Vagina (tissue), 2 donors: ENCODE measurements at regions of chr22 and their contacts with region 1.

Region 1: GRCh38 chr22:20418211-20418788 is 19.3 kb downstream of the SCARF2 start:
- DNase-seq: no peak
- H3K4me3 ChIP-seq: peak overlapping the region; percentile 26 to 50
- H3K27ac ChIP-seq: peak overlapping the region; percentile 15
- H3K4me1 ChIP-seq: peaks cover 10% of the 10 kb centered on the region
- H3K27me3 ChIP-seq: no peaks in the 10 kb centered on the region
- CTCF ChIP-seq: peak; percentile 73 to 93 (median 74)
- POLR2A ChIP-seq: no peak

Region 2: DNA sequence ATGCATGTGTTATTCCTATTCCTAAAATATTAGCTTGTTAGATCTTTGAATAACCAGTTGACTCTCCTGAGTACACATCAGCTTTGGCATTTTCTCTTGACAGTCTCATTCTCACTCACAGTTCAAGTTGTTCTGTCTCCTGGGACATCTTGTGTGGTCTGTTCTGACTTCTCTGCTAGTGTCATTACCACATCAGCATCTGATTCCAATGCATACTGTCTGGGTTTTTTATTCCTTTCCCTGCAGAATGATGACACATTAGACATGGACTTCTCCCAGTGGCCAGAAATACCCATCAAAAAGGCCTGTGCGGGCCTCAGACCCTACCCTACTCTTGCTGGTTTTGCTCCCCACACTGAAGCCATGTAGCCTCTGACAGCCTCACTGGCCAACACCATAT is 21.7 kb before region 1 on chr22:
- intact Hi-C with region 1: loop called (anchors 1 kb)
- DNase-seq: peak; percentile 31 to 52
- H3K4me3 ChIP-seq: no peak overlapping the region
- H3K27ac ChIP-seq: no peak overlapping the region
- H3K4me1 ChIP-seq: peaks cover 30% of the 10 kb centered on the region
- H3K27me3 ChIP-seq: no peaks in the 10 kb centered on the region
- CTCF ChIP-seq: no peak
- POLR2A ChIP-seq: no peak

Region 3: GRCh38 chr22:20456064-20456721 is 37.9 kb after region 1 on chr22:
- intact Hi-C with region 1: loop called (anchors 5 kb)
- DNase-seq: no peak
- H3K4me3 ChIP-seq: no peak overlapping the region
- H3K27ac ChIP-seq: no peak overlapping the region
- H3K4me1 ChIP-seq: no peaks in the 10 kb centered on the region
- H3K27me3 ChIP-seq: no peaks in the 10 kb centered on the region
- CTCF ChIP-seq: peak; percentile 77 to 94 (median 92)
- POLR2A ChIP-seq: no peak

Region 4: GRCh38 chr22:20469110-20469868 is 51.0 kb after region 1 on chr22:
- intact Hi-C with region 1: no loop called
- DNase-seq: no peak
- H3K4me3 ChIP-seq: no peak overlapping the region
- H3K27ac ChIP-seq: no peak overlapping the region
- H3K4me1 ChIP-seq: no peaks in the 10 kb centered on the region
- H3K27me3 ChIP-seq: no peaks in the 10 kb centered on the region
- CTCF ChIP-seq: no peak
- POLR2A ChIP-seq: no peak